CD4-positive, alpha-beta T cell (primary cell): ENCODE measurements at regions of chr15 and their contacts with region 1.

Region 1: DNA sequence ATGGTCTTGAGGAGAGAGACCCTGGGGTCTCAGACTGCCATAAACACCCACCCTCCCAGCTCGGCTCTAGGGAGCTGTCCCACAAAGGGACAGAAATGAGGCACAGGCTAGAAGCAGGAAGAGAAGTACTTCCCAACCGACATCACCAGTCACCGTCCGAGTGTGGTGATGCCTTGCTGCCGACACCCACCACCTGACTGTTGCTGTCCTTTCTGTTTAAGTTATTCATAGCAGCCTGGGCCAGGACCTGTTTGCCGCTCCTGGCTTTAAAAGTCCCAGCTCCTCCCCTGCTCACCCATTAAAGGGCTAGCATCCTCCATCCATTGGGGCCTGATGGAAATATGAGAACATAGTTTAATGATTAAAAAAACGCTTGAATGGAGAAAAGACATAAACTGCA is 13.2 kb upstream of the SPG11 start:
- DNase-seq: peak in 4 of 14 experiments; percentile 40 to 79 (median 48)
- ATAC-seq: peak; percentile 22
- H3K4me3 ChIP-seq: peak overlapping the region; percentile 15
- H3K4me3 Mint-ChIP-seq: peak overlapping the region; percentile 75
- H3K27ac ChIP-seq: peak overlapping the region; percentile 51 to 84
- H3K27ac Mint-ChIP-seq: peak overlapping the region; percentile 89
- H3K4me1 ChIP-seq: peaks cover 100% of the 10 kb centered on the region
- H3K4me1 Mint-ChIP-seq: peaks cover 91% of the 10 kb centered on the region
- H3K27me3 ChIP-seq: no peaks in the 10 kb centered on the region
- H3K27me3 Mint-ChIP-seq: no peaks in the 10 kb centered on the region
- CTCF ChIP-seq: no peak

Region 2: GRCh38 chr15:44692659-44693058 is 16.0 kb after region 1 on chr15:
- CTCF ChIA-PET with region 1: no interaction called
- POLR2A ChIA-PET with region 1: interaction called, 30 read pairs
- intact Hi-C with region 1: no loop called
- DNase-seq: no peak
- ATAC-seq: no peak
- H3K4me3 ChIP-seq: no peak overlapping the region
- H3K4me3 Mint-ChIP-seq: no peak overlapping the region
- H3K27ac ChIP-seq: no peak overlapping the region
- H3K27ac Mint-ChIP-seq: no peak overlapping the region
- H3K4me1 ChIP-seq: peaks cover 22% of the 10 kb centered on the region
- H3K4me1 Mint-ChIP-seq: peaks cover 53% of the 10 kb centered on the region
- H3K27me3 ChIP-seq: no peaks in the 10 kb centered on the region
- H3K27me3 Mint-ChIP-seq: no peaks in the 10 kb centered on the region
- CTCF ChIP-seq: no peak